Left ventricle myocardium inferior (tissue), 1 donor: ENCODE measurements at regions of chr1 and their contacts with region 1.

Region 1: GRCh38 chr1:156129706-156130581 is 15.4 kb downstream of the LMNA start:
- DNase-seq: peak; percentile 80
- H3K4me3 ChIP-seq: peak overlapping the region; percentile 50
- H3K27ac ChIP-seq: peak overlapping the region; percentile 97
- H3K4me1 ChIP-seq: peaks cover 74% of the 10 kb centered on the region
- H3K27me3 ChIP-seq: no peaks in the 10 kb centered on the region
- CTCF ChIP-seq: peak; percentile 99

Region 2: DNA sequence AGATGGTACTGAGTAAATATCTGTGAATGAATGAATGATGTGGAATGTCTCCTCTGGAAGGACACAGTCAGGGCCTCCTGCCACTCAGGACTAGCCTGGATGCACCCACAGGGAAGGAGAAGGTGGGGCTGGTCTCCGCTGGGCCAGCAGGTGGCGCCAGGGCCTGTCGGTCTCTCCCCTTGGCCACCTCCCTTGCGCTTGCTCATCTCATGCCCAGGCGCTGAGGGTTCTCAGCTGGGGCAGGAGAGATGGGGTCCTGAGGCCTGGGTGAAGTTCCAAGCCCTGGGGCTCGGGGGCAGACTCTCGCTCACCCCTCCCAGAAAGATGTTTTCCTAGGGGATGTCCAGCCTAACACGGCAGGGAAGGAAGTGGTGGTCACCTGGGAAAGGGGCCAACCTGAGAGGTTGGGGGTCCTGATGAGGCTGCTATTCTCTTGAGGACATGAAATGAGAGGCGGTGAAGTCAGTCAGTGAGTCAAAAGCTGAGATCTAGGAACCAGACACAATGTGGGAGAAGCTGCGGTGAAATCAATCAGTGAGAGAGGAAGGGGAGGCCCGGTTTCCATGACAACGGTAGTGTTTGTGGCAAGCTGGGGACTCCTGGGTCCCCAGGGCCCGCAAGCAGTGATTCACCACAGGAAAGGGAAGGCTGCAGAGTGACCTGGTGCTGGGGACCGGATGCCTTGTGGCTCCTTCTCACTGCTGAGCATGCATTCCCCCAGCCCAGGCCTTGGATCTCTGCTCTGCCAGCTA is 33.1 kb before region 1 on chr1:
- intact Hi-C with region 1: loop called (anchors 2 kb)
- DNase-seq: peak; percentile 91
- H3K4me3 ChIP-seq: peak overlapping the region; percentile 14
- H3K27ac ChIP-seq: peak overlapping the region; percentile 84
- H3K4me1 ChIP-seq: peaks cover 40% of the 10 kb centered on the region
- H3K27me3 ChIP-seq: no peaks in the 10 kb centered on the region
- CTCF ChIP-seq: peak; percentile 98

Region 3: GRCh38 chr1:156414461-156415064 is 284.6 kb after region 1 on chr1:
- intact Hi-C with region 1: no loop called
- DNase-seq: no peak
- H3K4me3 ChIP-seq: no peak overlapping the region
- H3K27ac ChIP-seq: no peak overlapping the region
- H3K4me1 ChIP-seq: no peaks in the 10 kb centered on the region
- H3K27me3 ChIP-seq: peaks cover 90% of the 10 kb centered on the region
- CTCF ChIP-seq: no peak